IMR-90 (cell line): ENCODE measurements at regions of chr1 and their contacts with region 1.

Region 1: GRCh38 chr1:229258031-229258756 is 12.7 kb upstream of the RAB4A start:
- DNase-seq: peak; percentile 72
- ATAC-seq: peak; percentile 90
- H3K4me3 ChIP-seq: no peak overlapping the region
- H3K27ac ChIP-seq: no peak overlapping the region
- H3K4me1 ChIP-seq: no peaks in the 10 kb centered on the region
- H3K27me3 ChIP-seq: peaks cover 5% of the 10 kb centered on the region; the same call in 1 of the 2 replicates
- CTCF ChIP-seq: peak; percentile 92
- POLR2A ChIP-seq: no peak
- RAD21 ChIP-seq: peak; percentile 91

Region 2: DNA sequence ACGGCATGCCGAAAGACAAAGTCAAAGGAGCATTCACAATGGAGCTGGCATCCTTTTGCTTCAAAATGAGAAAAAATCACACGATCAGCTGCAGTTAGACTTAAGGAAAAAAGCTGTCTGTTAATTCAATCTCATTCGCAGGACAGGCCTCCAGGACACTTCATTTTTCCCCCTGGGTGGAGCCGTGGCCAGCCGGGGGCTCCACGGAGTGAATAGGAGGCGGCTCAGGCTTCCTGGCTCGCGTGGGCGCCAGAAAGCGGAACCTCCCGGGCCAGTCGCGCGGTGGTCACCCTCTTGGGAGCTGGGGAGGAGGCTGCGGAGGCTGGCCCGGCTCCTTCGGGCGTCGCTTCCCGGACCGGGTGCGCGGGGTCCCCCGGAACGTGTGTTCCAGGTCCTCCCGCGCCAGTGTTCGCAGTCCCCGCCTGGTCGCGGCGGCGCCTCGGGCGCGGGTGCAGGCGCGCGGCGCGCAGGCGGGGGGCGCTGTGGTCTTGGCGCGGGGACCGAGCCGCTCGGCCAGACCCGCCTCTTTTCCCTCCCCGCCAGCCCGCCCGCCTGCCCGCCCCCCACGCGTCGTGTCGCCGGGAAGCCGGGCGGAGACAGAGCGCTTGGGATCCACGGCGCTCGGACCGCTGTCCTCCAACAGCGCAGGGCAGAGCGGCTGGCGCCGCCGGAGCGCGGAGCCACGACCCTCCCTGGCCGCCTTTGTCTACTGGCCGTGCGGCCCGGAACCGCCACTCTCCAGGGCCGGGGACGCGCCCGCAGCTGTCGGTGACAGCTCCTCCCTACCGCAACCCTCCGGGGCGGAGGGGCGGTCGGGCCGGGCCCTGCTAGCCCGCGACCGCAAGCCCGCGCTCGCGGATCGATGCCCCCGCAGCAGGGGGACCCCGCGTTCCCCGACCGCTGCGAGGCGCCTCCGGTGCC is 523.1 kb before region 1 on chr1 and contains the start of gene RHOU:
- CTCF ChIA-PET with region 1: interaction called, 6 read pairs
- POLR2A ChIA-PET with region 1: no interaction called
- dilution Hi-C with region 1: no loop called
- in situ Hi-C with region 1: no loop called
- intact Hi-C with region 1: loop called (anchors 10 kb)
- DNase-seq: peak; percentile 37
- ATAC-seq: peak; percentile 92
- H3K4me3 ChIP-seq: peak within 1 kb of the TSS; percentile 62
- H3K27ac ChIP-seq: peak within 1 kb of the TSS; percentile 58
- H3K4me1 ChIP-seq: no peaks in the 10 kb centered on the region; the same call in 1 of the 2 replicates
- H3K27me3 ChIP-seq: peaks cover 21% of the 10 kb centered on the region
- CTCF ChIP-seq: peak; percentile 71
- POLR2A ChIP-seq: no peak
- RAD21 ChIP-seq: peak; percentile 71
- total RNA-seq, gene RHOU: 0.72 and 0.83 TPM in 2 replicates

Region 3: GRCh38 chr1:229221104-229222019 is 36.8 kb before region 1 on chr1:
- CTCF ChIA-PET with region 1: no interaction called
- POLR2A ChIA-PET with region 1: no interaction called
- dilution Hi-C with region 1: no loop called
- in situ Hi-C with region 1: no loop called
- intact Hi-C with region 1: no loop called
- DNase-seq: peak; percentile 36
- ATAC-seq: peak; percentile 19; the same call in 1 of the 2 replicates
- H3K4me3 ChIP-seq: no peak overlapping the region
- H3K27ac ChIP-seq: peak overlapping the region; percentile 11; the same call in 1 of the 2 replicates
- H3K4me1 ChIP-seq: peaks cover 8% of the 10 kb centered on the region
- H3K27me3 ChIP-seq: no peaks in the 10 kb centered on the region
- CTCF ChIP-seq: no peak
- POLR2A ChIP-seq: no peak
- RAD21 ChIP-seq: no peak

Region 4: GRCh38 chr1:229452956-229453801 is 195.0 kb after region 1 on chr1:
- CTCF ChIA-PET with region 1: interaction called, 4 read pairs
- POLR2A ChIA-PET with region 1: no interaction called
- dilution Hi-C with region 1: no loop called
- in situ Hi-C with region 1: no loop called
- intact Hi-C with region 1: loop called (anchors 1 kb)
- DNase-seq: peak; percentile 50
- ATAC-seq: peak; percentile 61; the same call in 1 of the 2 replicates
- H3K4me3 ChIP-seq: no peak overlapping the region
- H3K27ac ChIP-seq: no peak overlapping the region
- H3K4me1 ChIP-seq: no peaks in the 10 kb centered on the region
- H3K27me3 ChIP-seq: no peaks in the 10 kb centered on the region
- CTCF ChIP-seq: peak; percentile 50
- POLR2A ChIP-seq: no peak
- RAD21 ChIP-seq: peak; percentile 62

Region 5: DNA sequence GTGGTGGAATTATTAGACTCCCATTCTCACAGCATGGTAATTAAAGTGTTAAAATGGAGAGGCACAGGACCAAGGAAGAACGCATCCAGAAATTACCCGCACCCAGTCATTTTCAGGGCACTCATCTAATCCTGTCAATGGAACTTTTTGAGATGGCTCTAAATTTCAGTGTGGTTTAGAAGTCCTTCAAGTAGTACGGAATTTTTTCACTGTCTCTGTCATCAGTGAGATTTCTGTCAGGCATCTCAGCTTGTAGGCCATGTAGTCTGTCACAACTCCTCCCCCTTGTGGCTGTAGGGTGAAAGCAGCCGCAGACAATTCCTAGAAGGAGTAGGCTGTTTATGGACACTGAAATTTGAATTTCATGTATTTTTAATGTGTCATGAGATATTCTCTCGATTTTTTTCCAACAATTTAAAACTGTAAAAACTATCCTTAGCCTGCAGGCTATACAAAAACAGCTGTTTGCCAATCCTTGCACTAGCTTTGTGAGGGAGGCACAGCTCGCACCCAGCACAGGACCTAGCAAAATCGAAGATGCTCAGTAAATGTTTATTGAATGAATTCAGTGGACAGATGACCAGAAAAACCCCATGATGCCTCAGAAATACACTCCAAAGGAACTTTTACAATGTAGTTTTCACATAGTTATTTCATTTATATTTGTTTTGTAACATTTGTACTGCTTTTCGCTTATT is 256.5 kb after region 1 on chr1:
- CTCF ChIA-PET with region 1: interaction called, 3 read pairs
- POLR2A ChIA-PET with region 1: no interaction called
- dilution Hi-C with region 1: no loop called
- in situ Hi-C with region 1: no loop called
- intact Hi-C with region 1: loop called (anchors 1 kb)
- DNase-seq: peak; percentile 78
- ATAC-seq: peak; percentile 98
- H3K4me3 ChIP-seq: no peak overlapping the region
- H3K27ac ChIP-seq: no peak overlapping the region
- H3K4me1 ChIP-seq: no peaks in the 10 kb centered on the region; the same call in 1 of the 2 replicates
- H3K27me3 ChIP-seq: no peaks in the 10 kb centered on the region
- CTCF ChIP-seq: peak; percentile 82
- POLR2A ChIP-seq: no peak
- RAD21 ChIP-seq: peak; percentile 61

Region 6: DNA sequence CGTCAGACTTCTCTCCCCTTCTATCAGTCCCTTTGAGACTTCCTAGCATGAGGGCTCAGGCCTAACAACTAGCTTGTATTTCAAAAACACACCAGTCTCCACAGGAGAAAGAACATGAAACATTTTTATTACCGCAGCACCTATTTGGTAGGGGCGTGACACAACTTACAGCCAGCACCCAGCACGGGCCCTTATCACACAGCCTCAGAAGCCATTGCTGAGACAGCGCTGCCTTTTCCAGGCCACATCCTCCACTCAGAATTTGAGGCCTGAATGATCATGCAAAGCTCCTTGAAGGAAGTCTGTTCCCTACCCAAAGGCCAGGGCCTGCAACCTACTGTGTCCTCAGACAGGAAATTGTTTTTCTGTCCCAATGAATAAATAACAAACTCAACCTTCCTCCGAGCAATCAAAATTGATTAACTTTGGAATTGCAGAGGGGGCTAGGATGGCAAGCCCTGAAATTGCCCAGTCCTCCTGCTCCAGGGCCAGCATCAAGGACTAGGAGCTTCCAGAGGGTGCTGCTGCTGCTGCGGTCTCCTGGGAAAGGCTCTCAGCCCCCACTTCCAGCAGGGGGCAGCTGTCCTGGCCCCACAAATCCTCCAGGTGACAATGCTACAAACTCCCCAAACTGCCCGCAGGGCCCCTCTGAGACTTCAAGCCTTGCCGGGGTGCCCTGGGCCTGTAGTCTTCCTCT is 714.6 kb after region 1 on chr1:
- CTCF ChIA-PET with region 1: no interaction called
- POLR2A ChIA-PET with region 1: no interaction called
- dilution Hi-C with region 1: no loop called
- in situ Hi-C with region 1: no loop called
- intact Hi-C with region 1: no loop called
- DNase-seq: no peak
- ATAC-seq: no peak
- H3K4me3 ChIP-seq: no peak overlapping the region
- H3K27ac ChIP-seq: no peak overlapping the region
- H3K4me1 ChIP-seq: no peaks in the 10 kb centered on the region
- H3K27me3 ChIP-seq: no peaks in the 10 kb centered on the region
- CTCF ChIP-seq: 0 out of 2 replicates have a peak, but pooled peaks have one; percentile 14
- POLR2A ChIP-seq: no peak
- RAD21 ChIP-seq: no peak